Caco-2 (cell line): ENCODE measurements at regions of chr6 and their contacts with region 1.

Region 1: GRCh38 chr6:110053395-110054240 is 75.5 kb downstream of the GPR6 start:
- DNase-seq: peak in 1 of 2 experiments; percentile 57
- H3K4me3 ChIP-seq: no peak overlapping the region
- H3K4me3 Mint-ChIP-seq: no peak overlapping the region
- H3K27ac Mint-ChIP-seq: no peak overlapping the region
- H3K4me1 ChIP-seq: no peaks in the 10 kb centered on the region
- H3K4me1 Mint-ChIP-seq: no peaks in the 10 kb centered on the region
- H3K27me3 ChIP-seq: no peaks in the 10 kb centered on the region; the same call in 1 of the 2 replicates
- H3K27me3 Mint-ChIP-seq: peaks cover 10% of the 10 kb centered on the region
- CTCF ChIP-seq: peak; percentile 67 to 68

Region 2: GRCh38 chr6:109526905-109527628 is 526.6 kb before region 1 on chr6:
- CTCF ChIA-PET with region 1: no interaction called
- POLR2A ChIA-PET with region 1: no interaction called
- intact Hi-C with region 1: loop called (anchors 1 kb)
- DNase-seq: peak; percentile 53 to 67
- H3K4me3 ChIP-seq: no peak overlapping the region
- H3K4me3 Mint-ChIP-seq: no peak overlapping the region
- H3K27ac Mint-ChIP-seq: no peak overlapping the region
- H3K4me1 ChIP-seq: no peaks in the 10 kb centered on the region
- H3K4me1 Mint-ChIP-seq: no peaks in the 10 kb centered on the region
- H3K27me3 ChIP-seq: no peaks in the 10 kb centered on the region
- H3K27me3 Mint-ChIP-seq: peaks cover 4% of the 10 kb centered on the region
- CTCF ChIP-seq: peak; percentile 56 to 65